ENCODE measurements at regions of chr6 and their contacts with region 1.

Region 1: GRCh38 chr6:52647199-52647598 is 23.7 kb upstream of the TMEM14A start:
- DNase-seq: no peak
- ATAC-seq: no peak
- H3K4me3 ChIP-seq: no peak overlapping the region
- H3K27ac ChIP-seq: no peak overlapping the region
- H3K4me1 ChIP-seq: no peaks in the 10 kb centered on the region; a peak in 1 of 4 replicates
- H3K27me3 ChIP-seq: no peaks in the 10 kb centered on the region
- CTCF ChIP-seq: no peak
- POLR2A ChIP-seq: no peak
- RAD21 ChIP-seq: no peak

Region 2: GRCh38 chr6:52598123-52598823 is 48.9 kb before region 1 on chr6:
- CTCF ChIA-PET with region 1: interaction called, 4 read pairs
- POLR2A ChIA-PET with region 1: no interaction called
- RAD21 ChIA-PET with region 1: no interaction called
- intact Hi-C with region 1: loop called (anchors 5 kb)
- DNase-seq: peak; percentile 69
- ATAC-seq: peak; percentile 95
- H3K4me3 ChIP-seq: no peak overlapping the region
- H3K27ac ChIP-seq: no peak overlapping the region
- H3K4me1 ChIP-seq: peaks cover 0 to 27% of the 10 kb centered on the region in 2 experiments; a peak in 2 of 4 replicates
- H3K27me3 ChIP-seq: no peaks in the 10 kb centered on the region
- CTCF ChIP-seq: peak; percentile 72 to 85 (median 84)
- POLR2A ChIP-seq: no peak
- RAD21 ChIP-seq: peak; percentile 68

Region 3: GRCh38 chr6:52635049-52635577 is 12.1 kb before region 1 on chr6:
- CTCF ChIA-PET with region 1: interaction called, 15 read pairs
- POLR2A ChIA-PET with region 1: no interaction called
- RAD21 ChIA-PET with region 1: no interaction called
- intact Hi-C with region 1: no loop called
- DNase-seq: no peak
- ATAC-seq: no peak
- H3K4me3 ChIP-seq: no peak overlapping the region
- H3K27ac ChIP-seq: no peak overlapping the region
- H3K4me1 ChIP-seq: no peaks in the 10 kb centered on the region
- H3K27me3 ChIP-seq: no peaks in the 10 kb centered on the region
- CTCF ChIP-seq: no peak
- POLR2A ChIP-seq: no peak
- RAD21 ChIP-seq: no peak

Region 4: GRCh38 chr6:52929321-52930164 is 282.3 kb after region 1 on chr6:
- CTCF ChIA-PET with region 1: no interaction called
- POLR2A ChIA-PET with region 1: no interaction called
- RAD21 ChIA-PET with region 1: no interaction called
- intact Hi-C with region 1: no loop called
- DNase-seq: peak; percentile 22
- ATAC-seq: peak; percentile 88
- H3K4me3 ChIP-seq: no peak overlapping the region
- H3K27ac ChIP-seq: no peak overlapping the region
- H3K4me1 ChIP-seq: peaks cover 0 to 19% of the 10 kb centered on the region in 2 experiments; a peak in 2 of 4 replicates
- H3K27me3 ChIP-seq: no peaks in the 10 kb centered on the region
- CTCF ChIP-seq: no peak
- POLR2A ChIP-seq: no peak
- RAD21 ChIP-seq: no peak

Measured in HCT116 (cell line).